Esophagus muscularis mucosa (tissue), 4 donors: ENCODE measurements at regions of chr10 and their contacts with region 1.

Region 1: DNA sequence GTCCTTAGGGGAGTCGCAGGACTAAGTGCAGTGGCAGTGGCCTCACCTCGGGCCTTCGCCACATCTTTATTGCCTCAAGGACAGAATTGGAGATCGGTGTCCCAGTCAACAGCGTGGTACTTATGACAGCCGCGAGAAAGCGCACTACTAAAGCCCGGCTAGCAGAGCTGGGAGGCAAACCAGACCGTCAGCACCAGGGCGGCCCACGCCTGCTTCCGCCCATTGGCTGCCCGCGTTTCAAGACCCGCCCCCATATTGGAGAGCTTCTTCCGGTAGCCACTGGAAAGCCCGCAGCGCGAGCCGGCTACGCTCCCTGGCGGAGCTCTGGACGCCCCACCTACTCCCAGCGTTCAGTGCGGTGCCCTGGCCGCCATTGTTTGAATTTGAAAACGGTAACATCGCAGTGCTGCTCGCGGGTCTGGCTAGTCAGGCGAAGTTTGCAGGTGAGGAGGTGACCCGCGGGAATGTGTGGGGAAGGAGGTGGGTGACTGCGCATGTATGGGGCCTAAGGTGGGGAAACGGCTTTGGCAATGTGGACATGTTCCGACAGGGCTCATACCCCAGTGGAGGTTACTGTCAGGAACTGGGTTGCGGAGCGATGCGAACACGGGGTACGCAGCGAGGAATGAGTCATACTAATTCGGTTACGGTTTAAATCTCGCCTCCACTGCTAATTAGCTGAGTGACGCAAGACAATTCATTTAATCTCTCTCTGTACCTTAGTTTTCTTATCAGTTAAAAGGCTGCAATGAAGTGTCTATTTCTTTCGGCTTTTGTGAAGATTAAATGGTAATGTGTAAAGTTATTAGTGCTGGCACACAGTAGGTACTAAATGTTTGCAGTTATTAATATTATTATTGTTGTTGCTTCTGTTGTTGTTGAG is at the start of gene KIF20B:
- DNase-seq: peak; percentile 98
- H3K4me3 ChIP-seq: peak within 1 kb of the TSS; percentile 64 to 67 (median 66)
- H3K27ac ChIP-seq: peak within 1 kb of the TSS; percentile 73 to 89 (median 82)
- H3K4me1 ChIP-seq: peaks cover 10 to 23% (median 14%) of the 10 kb centered on the region in 4 donors
- H3K27me3 ChIP-seq: no peaks in the 10 kb centered on the region
- CTCF ChIP-seq: peak; percentile 37 to 61 (median 56)
- EP300 ChIP-seq: no peak
- POLR2A ChIP-seq: no peak
- total RNA-seq, gene KIF20B: 1.4 to 2.1 (median 1.8) TPM

Region 2: DNA sequence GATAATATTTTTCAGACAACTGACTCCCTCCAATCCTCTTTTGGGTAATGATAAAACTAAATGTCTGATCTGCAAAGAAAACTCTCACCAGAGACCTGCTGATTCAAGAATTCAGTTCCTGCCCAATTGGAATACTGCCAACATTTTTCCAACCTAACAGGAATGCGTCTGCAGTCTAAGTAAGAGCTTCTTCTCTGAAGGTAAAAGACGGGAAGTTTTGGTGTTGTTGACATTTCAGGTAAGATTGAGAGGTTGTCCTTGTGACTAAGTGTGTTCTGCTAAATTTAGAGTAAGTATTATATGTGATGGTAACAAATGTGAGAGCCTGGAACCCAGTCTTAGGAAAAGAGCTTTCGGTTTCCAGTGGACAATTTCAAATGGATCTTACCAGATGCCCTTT is 269.5 kb before region 1 on chr10:
- intact Hi-C with region 1: loop called (anchors 5 kb)
- DNase-seq: no peak
- H3K4me3 ChIP-seq: no peak overlapping the region
- H3K27ac ChIP-seq: peak overlapping the region in 1 of 4 donors; percentile 16
- H3K4me1 ChIP-seq: peaks cover 9 to 25% (median 19%) of the 10 kb centered on the region in 4 donors
- H3K27me3 ChIP-seq: no peaks in the 10 kb centered on the region
- CTCF ChIP-seq: no peak
- EP300 ChIP-seq: no peak
- POLR2A ChIP-seq: no peak

Region 3: GRCh38 chr10:89643431-89644331 is 57.8 kb before region 1 on chr10:
- intact Hi-C with region 1: loop called (anchors 2 kb)
- DNase-seq: peak; percentile 94
- H3K4me3 ChIP-seq: peak overlapping the region; percentile 68 to 92 (median 73)
- H3K27ac ChIP-seq: peak overlapping the region; percentile 88 to 93 (median 91)
- H3K4me1 ChIP-seq: peaks cover 12 to 25% (median 17%) of the 10 kb centered on the region in 4 donors
- H3K27me3 ChIP-seq: no peaks in the 10 kb centered on the region
- CTCF ChIP-seq: no peak
- EP300 ChIP-seq: no peak
- POLR2A ChIP-seq: peak; percentile 72